ENCODE measurements at regions of chr19 and their contacts with region 1.

Region 1: DNA sequence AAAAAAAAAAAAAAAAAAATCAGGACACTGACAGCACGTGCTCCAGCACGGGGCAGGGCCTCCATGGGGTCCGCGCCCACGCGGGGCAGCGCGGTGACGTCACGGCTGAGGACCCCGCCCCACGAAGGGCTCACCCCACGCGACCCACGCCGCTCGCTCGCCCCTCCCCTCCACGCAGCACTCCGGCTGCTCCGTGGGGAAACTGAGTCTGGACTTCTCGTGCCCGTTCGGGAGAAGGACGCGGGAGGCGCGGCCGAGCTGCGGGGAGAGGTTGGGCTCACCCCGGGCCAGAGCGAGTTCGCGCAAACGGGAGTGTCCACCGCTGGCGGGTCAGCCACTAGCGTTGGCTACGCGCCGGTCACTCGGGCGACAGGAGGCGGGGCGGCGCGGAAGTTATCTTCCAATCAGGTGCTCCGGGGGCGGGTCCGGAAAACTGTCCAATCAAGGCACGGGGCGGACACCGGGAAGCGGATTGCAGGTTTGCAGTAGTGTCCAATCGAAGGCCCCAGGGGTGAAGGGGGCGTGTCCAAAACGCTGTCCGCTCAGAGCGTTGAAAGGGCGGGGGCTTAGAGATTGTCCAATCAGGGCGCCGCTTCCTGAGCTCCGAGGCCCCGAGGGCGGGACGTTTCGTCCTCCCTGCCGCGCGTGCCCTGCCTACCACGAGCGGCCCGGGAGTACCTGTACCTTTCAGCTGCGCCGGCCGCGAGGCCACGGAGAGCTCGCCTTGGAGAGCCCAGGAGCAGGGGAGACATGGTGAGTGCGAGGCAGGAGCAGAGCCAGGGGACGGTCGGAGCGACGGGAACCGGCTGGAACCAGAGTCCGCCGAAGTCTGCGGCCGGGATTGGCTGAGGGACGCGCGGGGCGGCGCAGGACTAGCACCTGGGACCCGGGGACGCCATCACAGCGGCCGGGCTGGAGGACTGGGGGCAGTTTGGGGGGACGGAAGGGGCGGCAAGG is at the start of gene ZNF57:
- DNase-seq: peak; percentile 100

Region 2: GRCh38 chr19:1360818-1361461 is 1539.6 kb before region 1 on chr19:
- intact Hi-C with region 1: no loop called
- DNase-seq: peak; percentile 76 to 97 (median 82)

Region 3: GRCh38 chr19:2944775-2945574 is 44.4 kb after region 1 on chr19 and contains the start of gene ZNF77:
- intact Hi-C with region 1: loop called (anchors 5 kb)
- DNase-seq: peak; percentile 97 to 100 (median 99)

Measured in posterior cingulate gyrus (tissue), 11 donors.